Caco-2 (cell line): ENCODE measurements at regions of chr9 and their contacts with region 1.

Region 1: GRCh38 chr9:35664531-35665470 is at the start of gene ARHGEF39:
- DNase-seq: peak; percentile 86 to 92
- H3K4me3 ChIP-seq: peak within 1 kb of the TSS; percentile 73
- H3K4me3 Mint-ChIP-seq: peak within 1 kb of the TSS; percentile 83
- H3K27ac Mint-ChIP-seq: peak within 1 kb of the TSS; percentile 89
- H3K4me1 ChIP-seq: peaks cover 27% of the 10 kb centered on the region
- H3K4me1 Mint-ChIP-seq: peaks cover 29% of the 10 kb centered on the region
- H3K27me3 ChIP-seq: no peaks in the 10 kb centered on the region
- H3K27me3 Mint-ChIP-seq: no peaks in the 10 kb centered on the region
- CTCF ChIP-seq: peak in 1 of 2 experiments; percentile 57
- total RNA-seq, gene ARHGEF39: 31.4 and 32.8 TPM in 2 replicates

Region 2: GRCh38 chr9:35690431-35691333 is 25.9 kb after region 1 on chr9:
- CTCF ChIA-PET with region 1: interaction called, 35 read pairs
- POLR2A ChIA-PET with region 1: interaction called, 6 read pairs
- intact Hi-C with region 1: loop called (anchors 1 kb)
- DNase-seq: peak; percentile 66 to 68
- H3K4me3 ChIP-seq: peak overlapping the region; percentile 60
- H3K4me3 Mint-ChIP-seq: peak overlapping the region; percentile 80
- H3K27ac Mint-ChIP-seq: peak overlapping the region; percentile 95
- H3K4me1 ChIP-seq: peaks cover 26% of the 10 kb centered on the region
- H3K4me1 Mint-ChIP-seq: peaks cover 8% of the 10 kb centered on the region
- H3K27me3 ChIP-seq: no peaks in the 10 kb centered on the region
- H3K27me3 Mint-ChIP-seq: no peaks in the 10 kb centered on the region
- CTCF ChIP-seq: no peak

Region 3: DNA sequence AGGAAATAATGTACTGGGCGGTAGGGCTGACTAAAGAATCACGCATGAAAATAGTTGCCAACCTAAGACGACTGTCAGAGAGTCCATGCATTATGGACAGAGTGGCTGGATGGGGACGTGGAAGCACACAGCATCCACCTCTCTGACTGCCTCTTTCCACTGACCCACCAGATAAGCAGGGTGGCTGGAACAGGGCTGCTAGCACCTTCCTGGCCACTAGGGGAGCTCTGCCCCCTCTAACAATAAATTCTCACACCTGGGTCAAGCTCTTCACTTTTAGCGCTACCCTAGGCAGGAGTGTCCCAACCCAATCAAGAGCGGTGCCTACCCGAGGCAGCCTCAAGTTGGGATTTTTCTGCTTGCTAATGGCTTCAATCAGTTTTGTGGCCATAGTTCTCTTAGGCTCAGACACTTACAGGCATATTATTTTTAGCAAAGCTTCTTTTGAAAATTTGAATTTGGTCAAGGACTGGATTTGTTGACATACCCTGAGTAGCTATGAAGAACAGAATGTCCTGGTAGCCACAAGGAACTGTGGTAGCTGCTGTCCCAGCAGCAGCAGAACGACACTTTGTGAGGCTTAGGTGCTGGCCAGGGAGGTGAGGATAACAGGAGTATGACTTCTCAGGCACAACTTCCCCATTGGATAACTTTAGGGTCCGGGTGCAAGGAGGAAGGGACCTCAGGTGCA is 31.9 kb after region 1 on chr9:
- CTCF ChIA-PET with region 1: interaction called, 35 read pairs
- POLR2A ChIA-PET with region 1: interaction called, 7 read pairs
- intact Hi-C with region 1: loop called (anchors 1 kb)
- DNase-seq: peak; percentile 68 to 76
- H3K4me3 ChIP-seq: no peak overlapping the region
- H3K4me3 Mint-ChIP-seq: no peak overlapping the region
- H3K27ac Mint-ChIP-seq: no peak overlapping the region
- H3K4me1 ChIP-seq: peaks cover 8% of the 10 kb centered on the region
- H3K4me1 Mint-ChIP-seq: no peaks in the 10 kb centered on the region
- H3K27me3 ChIP-seq: no peaks in the 10 kb centered on the region
- H3K27me3 Mint-ChIP-seq: no peaks in the 10 kb centered on the region
- CTCF ChIP-seq: peak; percentile 70 to 90

Region 4: GRCh38 chr9:35835216-35835632 is 170.4 kb after region 1 on chr9:
- CTCF ChIA-PET with region 1: no interaction called
- POLR2A ChIA-PET with region 1: no interaction called
- intact Hi-C with region 1: no loop called
- DNase-seq: no peak
- H3K4me3 ChIP-seq: no peak overlapping the region
- H3K4me3 Mint-ChIP-seq: no peak overlapping the region
- H3K27ac Mint-ChIP-seq: no peak overlapping the region
- H3K4me1 ChIP-seq: peaks cover 14% of the 10 kb centered on the region
- H3K4me1 Mint-ChIP-seq: peaks cover 18% of the 10 kb centered on the region
- H3K27me3 ChIP-seq: no peaks in the 10 kb centered on the region
- H3K27me3 Mint-ChIP-seq: no peaks in the 10 kb centered on the region
- CTCF ChIP-seq: no peak

Region 5: DNA sequence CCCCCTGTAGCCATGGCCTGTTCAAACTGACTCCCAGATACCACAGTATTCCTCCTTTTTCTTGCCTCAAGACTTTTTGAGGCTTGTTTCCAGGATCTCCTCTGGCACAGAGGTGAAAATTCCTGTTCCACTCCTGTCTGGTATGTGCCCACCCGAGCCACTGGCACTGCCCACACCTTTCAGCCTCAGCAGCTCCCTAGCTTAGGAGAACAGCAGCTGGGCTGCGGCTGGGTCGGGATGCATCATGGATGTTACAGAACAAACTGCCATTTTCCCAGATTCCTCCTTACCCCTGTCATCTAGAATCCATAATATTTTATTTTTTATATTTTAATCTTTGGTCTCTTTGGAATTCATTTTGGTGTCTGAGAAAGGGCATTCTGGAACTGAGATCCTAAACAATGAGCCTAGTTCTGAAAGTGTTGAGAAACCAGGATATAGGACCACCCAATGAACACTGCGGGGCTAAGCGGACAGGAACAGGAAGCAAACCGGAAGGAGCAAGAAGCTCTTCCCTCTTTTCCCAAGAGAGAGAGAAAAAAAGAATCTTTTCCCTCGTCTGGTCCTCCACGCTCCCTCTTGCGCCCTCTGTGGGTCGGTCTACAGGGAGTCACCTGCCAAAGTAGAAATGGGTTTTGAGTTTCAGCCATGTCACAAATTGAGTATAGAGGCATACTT is 280.7 kb after region 1 on chr9:
- CTCF ChIA-PET with region 1: no interaction called
- POLR2A ChIA-PET with region 1: no interaction called
- intact Hi-C with region 1: no loop called
- DNase-seq: peak; percentile 79 to 81
- H3K4me3 ChIP-seq: no peak overlapping the region
- H3K4me3 Mint-ChIP-seq: peak overlapping the region; percentile 57
- H3K27ac Mint-ChIP-seq: peak overlapping the region; percentile 58
- H3K4me1 ChIP-seq: peaks cover 12% of the 10 kb centered on the region; the same call in 1 of the 2 replicates
- H3K4me1 Mint-ChIP-seq: peaks cover 10% of the 10 kb centered on the region
- H3K27me3 ChIP-seq: no peaks in the 10 kb centered on the region
- H3K27me3 Mint-ChIP-seq: no peaks in the 10 kb centered on the region
- CTCF ChIP-seq: peak; percentile 77 to 79